ENCODE measurements at regions of chr6 and their contacts with region 1.

Region 1: GRCh38 chr6:36114798-36115408 is 15.4 kb upstream of the MAPK13 start:
- DNase-seq: no peak
- H3K4me3 ChIP-seq: no peak overlapping the region
- H3K27ac ChIP-seq: no peak overlapping the region
- H3K4me1 ChIP-seq: peaks cover 21% of the 10 kb centered on the region; the same call in 1 of the 2 replicates
- H3K27me3 ChIP-seq: no peaks in the 10 kb centered on the region
- CTCF ChIP-seq: no peak

Region 2: GRCh38 chr6:35962779-35963565 is 151.9 kb before region 1 on chr6:
- CTCF ChIA-PET with region 1: no interaction called
- POLR2A ChIA-PET with region 1: interaction called, 30 read pairs
- intact Hi-C with region 1: no loop called
- DNase-seq: no peak
- H3K4me3 ChIP-seq: no peak overlapping the region
- H3K27ac ChIP-seq: no peak overlapping the region
- H3K4me1 ChIP-seq: peaks cover 9% of the 10 kb centered on the region; the same call in 1 of the 2 replicates
- H3K27me3 ChIP-seq: no peaks in the 10 kb centered on the region
- CTCF ChIP-seq: no peak

Region 3: DNA sequence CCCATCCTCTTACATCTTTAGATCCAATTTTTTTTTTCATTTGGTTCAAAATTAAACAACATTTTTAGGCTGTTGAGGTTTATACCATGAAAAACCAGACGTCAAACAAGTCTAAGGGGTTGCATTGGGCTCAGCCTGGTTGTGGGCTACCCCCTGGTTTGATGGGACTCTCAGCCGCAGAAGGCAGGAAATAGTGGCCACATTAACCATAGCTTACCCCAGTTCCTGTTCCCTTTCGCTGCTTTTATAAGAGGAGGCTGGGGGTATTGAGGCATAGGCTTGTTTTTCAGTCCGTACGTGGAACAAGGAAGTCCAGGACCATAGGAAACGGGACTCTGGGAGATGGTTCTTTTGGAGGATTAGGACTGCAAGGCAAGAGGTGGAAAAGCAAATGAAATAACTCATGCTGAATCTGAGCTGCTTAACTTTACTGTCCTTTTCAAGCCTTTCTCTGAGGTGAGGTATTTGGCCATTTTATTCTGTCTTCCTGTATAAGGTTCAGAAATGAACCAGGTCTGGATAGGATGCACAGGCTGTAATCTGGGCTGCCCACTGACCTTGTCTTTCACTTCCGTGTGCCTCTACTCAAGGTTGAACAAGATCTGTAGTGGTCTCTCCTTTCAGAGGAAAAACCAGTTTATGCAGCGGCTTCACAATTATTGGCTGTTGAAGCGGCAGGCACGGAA is 89.3 kb after region 1 on chr6:
- CTCF ChIA-PET with region 1: interaction called, 24 read pairs
- POLR2A ChIA-PET with region 1: no interaction called
- intact Hi-C with region 1: no loop called
- DNase-seq: no peak
- H3K4me3 ChIP-seq: no peak overlapping the region
- H3K27ac ChIP-seq: no peak overlapping the region
- H3K4me1 ChIP-seq: no peaks in the 10 kb centered on the region; the same call in 1 of the 2 replicates
- H3K27me3 ChIP-seq: no peaks in the 10 kb centered on the region
- CTCF ChIP-seq: no peak

Measured in PC-9 (cell line).